ENCODE measurements at regions of chrX and their contacts with region 1.

Region 1: GRCh38 chrX:132615391-132616131 is 126.7 kb upstream of the MBNL3 start:
- DNase-seq: peak in 1 of 2 experiments; percentile 26
- ATAC-seq: peak; percentile 39 to 72; a peak in 3 of 6 replicates
- H3K4me3 ChIP-seq: no peak overlapping the region
- H3K27ac ChIP-seq: no peak overlapping the region
- H3K4me1 ChIP-seq: no peaks in the 10 kb centered on the region
- CTCF ChIP-seq: peak; percentile 25; the same call in 1 of the 3 replicates
- EP300 ChIP-seq: no peak
- POLR2A ChIP-seq: no peak
- RAD21 ChIP-seq: no peak

Region 2: GRCh38 chrX:132602701-132603100 is 12.9 kb before region 1 on chrX:
- CTCF ChIA-PET with region 1: interaction called, 15 read pairs
- POLR2A ChIA-PET with region 1: no interaction called
- DNase-seq: no peak
- ATAC-seq: no peak
- H3K4me3 ChIP-seq: no peak overlapping the region
- H3K27ac ChIP-seq: no peak overlapping the region
- H3K4me1 ChIP-seq: no peaks in the 10 kb centered on the region
- CTCF ChIP-seq: no peak
- EP300 ChIP-seq: no peak
- POLR2A ChIP-seq: no peak
- RAD21 ChIP-seq: no peak

Region 3: DNA sequence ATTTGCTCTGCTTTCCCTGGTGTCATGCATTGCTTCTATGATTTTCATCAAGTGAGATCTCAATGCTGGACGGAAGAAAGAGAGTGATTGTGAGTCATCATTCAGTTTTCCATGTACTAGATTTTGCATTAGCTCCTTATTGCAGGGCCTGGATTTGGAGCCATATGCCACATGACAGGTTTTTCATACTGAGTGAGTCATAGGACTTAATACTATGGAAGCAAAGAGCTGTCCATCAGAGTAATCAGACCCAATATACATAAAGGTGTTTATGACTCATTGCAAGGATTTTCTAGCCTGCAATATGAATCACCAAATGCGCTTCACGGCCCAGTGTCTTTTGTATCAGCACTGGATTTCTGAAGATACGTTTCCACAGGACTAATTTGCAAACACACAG is 613.8 kb after region 1 on chrX:
- CTCF ChIA-PET with region 1: no interaction called
- POLR2A ChIA-PET with region 1: no interaction called
- DNase-seq: no peak
- ATAC-seq: no peak
- H3K4me3 ChIP-seq: no peak overlapping the region
- H3K27ac ChIP-seq: no peak overlapping the region
- H3K4me1 ChIP-seq: no peaks in the 10 kb centered on the region
- CTCF ChIP-seq: no peak
- EP300 ChIP-seq: no peak
- POLR2A ChIP-seq: no peak
- RAD21 ChIP-seq: no peak